ENCODE measurements at regions of chr20 and their contacts with region 1.

Region 1: DNA sequence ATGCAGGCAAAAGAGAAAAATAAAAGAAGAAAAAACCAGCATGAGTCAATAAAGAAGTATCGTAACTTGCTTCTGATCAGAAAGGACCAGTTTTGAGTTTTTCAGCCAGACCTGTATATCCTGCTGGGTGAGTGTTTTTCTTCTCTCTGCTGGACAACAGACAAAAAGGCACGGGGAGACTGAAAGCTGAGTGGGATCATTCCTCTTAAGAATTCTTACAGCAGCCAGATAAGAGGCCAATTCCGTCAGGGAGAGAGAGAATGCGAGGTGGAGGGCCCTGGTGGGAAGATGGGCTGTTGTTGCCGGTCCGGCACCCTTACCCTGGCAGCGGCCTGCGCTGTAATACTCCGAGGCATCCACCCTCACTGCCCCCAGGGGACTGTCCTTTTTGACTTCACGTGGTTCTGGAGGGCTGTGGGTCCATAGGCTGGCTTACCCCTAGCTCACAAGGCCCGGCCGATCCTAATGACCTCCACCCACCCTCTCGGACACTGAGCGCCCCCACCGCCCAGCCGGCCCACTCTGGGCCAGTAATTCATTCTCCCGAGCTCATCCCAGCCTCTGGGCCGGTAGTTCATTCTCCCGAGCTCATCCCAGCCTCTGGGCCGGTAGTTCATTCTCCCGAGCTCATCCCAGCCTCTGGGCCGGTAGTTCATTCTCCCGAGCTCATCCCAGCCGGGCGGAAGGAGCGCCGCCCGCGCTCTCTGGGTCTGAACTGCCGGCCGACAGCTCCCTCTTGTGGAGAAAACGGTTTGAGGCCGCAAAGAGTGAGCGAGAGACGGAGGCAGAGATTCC is 118.3 kb upstream of the SIRPA start:
- DNase-seq: peak; percentile 69 to 91 (median 84)
- ATAC-seq: peak; percentile 94
- H3K4me3 ChIP-seq: peak overlapping the region; percentile 61 to 68
- H3K4me3 Mint-ChIP-seq: peak overlapping the region; percentile 84
- H3K27ac ChIP-seq: peak overlapping the region in 1 of 2 experiments; percentile 18
- H3K27ac Mint-ChIP-seq: peak overlapping the region; percentile 56
- H3K4me1 ChIP-seq: peaks cover 7% of the 10 kb centered on the region
- H3K4me1 Mint-ChIP-seq: peaks cover 16% of the 10 kb centered on the region
- H3K27me3 ChIP-seq: no peaks in the 10 kb centered on the region
- H3K27me3 Mint-ChIP-seq: peaks cover 13% of the 10 kb centered on the region
- CTCF ChIP-seq: peak; percentile 78

Region 2: GRCh38 chr20:1509237-1509636 is 267.6 kb before region 1 on chr20:
- CTCF ChIA-PET with region 1: interaction called, 25 read pairs
- POLR2A ChIA-PET with region 1: no interaction called
- intact Hi-C with region 1: loop called (anchors 1 kb)
- DNase-seq: peak in 6 of 9 experiments; percentile 10 to 54 (median 31)
- ATAC-seq: peak; percentile 69
- H3K4me3 ChIP-seq: no peak overlapping the region
- H3K4me3 Mint-ChIP-seq: no peak overlapping the region
- H3K27ac ChIP-seq: no peak overlapping the region
- H3K27ac Mint-ChIP-seq: no peak overlapping the region
- H3K4me1 ChIP-seq: no peaks in the 10 kb centered on the region
- H3K4me1 Mint-ChIP-seq: peaks cover 2% of the 10 kb centered on the region
- H3K27me3 ChIP-seq: no peaks in the 10 kb centered on the region
- H3K27me3 Mint-ChIP-seq: peaks cover 4% of the 10 kb centered on the region
- CTCF ChIP-seq: peak; percentile 38

Region 3: GRCh38 chr20:1555952-1556351 is 220.9 kb before region 1 on chr20:
- CTCF ChIA-PET with region 1: interaction called, 28 read pairs
- POLR2A ChIA-PET with region 1: interaction called, 4 read pairs
- intact Hi-C with region 1: loop called (anchors 1 kb)
- DNase-seq: peak in 2 of 9 experiments; percentile 50 to 62
- ATAC-seq: peak; percentile 49
- H3K4me3 ChIP-seq: no peak overlapping the region
- H3K4me3 Mint-ChIP-seq: no peak overlapping the region
- H3K27ac ChIP-seq: no peak overlapping the region
- H3K27ac Mint-ChIP-seq: no peak overlapping the region
- H3K4me1 ChIP-seq: no peaks in the 10 kb centered on the region
- H3K4me1 Mint-ChIP-seq: peaks cover 8% of the 10 kb centered on the region
- H3K27me3 ChIP-seq: no peaks in the 10 kb centered on the region
- H3K27me3 Mint-ChIP-seq: no peaks in the 10 kb centered on the region
- CTCF ChIP-seq: peak; percentile 22

Region 4: DNA sequence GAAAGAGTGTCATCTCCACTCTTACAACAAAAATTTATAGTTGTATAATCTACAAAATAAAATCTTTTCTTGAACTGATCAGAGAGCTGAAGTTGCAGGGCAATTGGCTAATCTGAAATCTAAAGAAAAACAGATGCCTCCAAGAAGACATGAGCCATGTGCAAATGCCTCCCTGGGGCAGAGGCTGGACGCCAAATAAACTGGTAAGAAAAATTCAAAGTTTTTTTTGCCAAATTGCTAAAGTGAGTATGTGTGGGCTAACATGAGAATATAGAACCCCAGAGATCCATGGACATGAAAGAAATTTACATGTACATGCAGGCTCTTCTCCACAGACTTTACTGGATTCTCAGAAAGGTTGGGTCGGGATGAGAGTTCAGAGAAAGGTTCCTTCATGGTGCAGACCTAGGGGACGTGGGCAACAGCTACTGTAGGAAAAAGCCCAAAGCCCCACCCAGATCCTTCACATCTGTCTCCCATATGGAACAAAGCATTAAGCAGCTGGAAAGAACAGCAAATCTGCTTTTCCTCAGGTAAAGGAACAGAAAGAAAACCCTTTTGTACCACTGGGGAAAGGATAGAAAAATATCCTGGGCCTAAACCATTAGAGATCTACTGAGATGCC is 28.8 kb before region 1 on chr20:
- CTCF ChIA-PET with region 1: interaction called, 14 read pairs
- POLR2A ChIA-PET with region 1: no interaction called
- intact Hi-C with region 1: no loop called
- DNase-seq: no peak
- ATAC-seq: no peak
- H3K4me3 ChIP-seq: no peak overlapping the region
- H3K4me3 Mint-ChIP-seq: no peak overlapping the region
- H3K27ac ChIP-seq: no peak overlapping the region
- H3K27ac Mint-ChIP-seq: no peak overlapping the region
- H3K4me1 ChIP-seq: no peaks in the 10 kb centered on the region
- H3K4me1 Mint-ChIP-seq: no peaks in the 10 kb centered on the region
- H3K27me3 ChIP-seq: no peaks in the 10 kb centered on the region
- H3K27me3 Mint-ChIP-seq: no peaks in the 10 kb centered on the region
- CTCF ChIP-seq: no peak

Region 5: GRCh38 chr20:1764136-1765033 is 12.5 kb before region 1 on chr20:
- CTCF ChIA-PET with region 1: interaction called, 76 read pairs
- POLR2A ChIA-PET with region 1: no interaction called
- intact Hi-C with region 1: loop called in 1 of 2 experiments (anchors 1 kb)
- DNase-seq: peak; percentile 30 to 73 (median 57)
- ATAC-seq: peak; percentile 75
- H3K4me3 ChIP-seq: no peak overlapping the region
- H3K4me3 Mint-ChIP-seq: no peak overlapping the region
- H3K27ac ChIP-seq: no peak overlapping the region
- H3K27ac Mint-ChIP-seq: no peak overlapping the region
- H3K4me1 ChIP-seq: no peaks in the 10 kb centered on the region
- H3K4me1 Mint-ChIP-seq: no peaks in the 10 kb centered on the region
- H3K27me3 ChIP-seq: no peaks in the 10 kb centered on the region
- H3K27me3 Mint-ChIP-seq: peaks cover 2% of the 10 kb centered on the region
- CTCF ChIP-seq: peak; percentile 88

Region 6: GRCh38 chr20:1805161-1805581 is 28.3 kb after region 1 on chr20:
- CTCF ChIA-PET with region 1: no interaction called
- POLR2A ChIA-PET with region 1: no interaction called
- intact Hi-C with region 1: no loop called
- DNase-seq: no peak
- ATAC-seq: no peak
- H3K4me3 ChIP-seq: no peak overlapping the region
- H3K4me3 Mint-ChIP-seq: no peak overlapping the region
- H3K27ac ChIP-seq: no peak overlapping the region
- H3K27ac Mint-ChIP-seq: no peak overlapping the region
- H3K4me1 ChIP-seq: peaks cover 11% of the 10 kb centered on the region
- H3K4me1 Mint-ChIP-seq: peaks cover 14% of the 10 kb centered on the region
- H3K27me3 ChIP-seq: peaks cover 6 to 19% of the 10 kb centered on the region in 2 experiments
- H3K27me3 Mint-ChIP-seq: peaks cover 69% of the 10 kb centered on the region
- CTCF ChIP-seq: no peak

Region 7: GRCh38 chr20:1979106-1979779 is 202.4 kb after region 1 on chr20:
- CTCF ChIA-PET with region 1: no interaction called
- POLR2A ChIA-PET with region 1: no interaction called
- intact Hi-C with region 1: no loop called
- DNase-seq: no peak
- ATAC-seq: no peak
- H3K4me3 ChIP-seq: no peak overlapping the region
- H3K4me3 Mint-ChIP-seq: no peak overlapping the region
- H3K27ac ChIP-seq: no peak overlapping the region
- H3K27ac Mint-ChIP-seq: no peak overlapping the region
- H3K4me1 ChIP-seq: no peaks in the 10 kb centered on the region
- H3K4me1 Mint-ChIP-seq: no peaks in the 10 kb centered on the region
- H3K27me3 ChIP-seq: no peaks in the 10 kb centered on the region
- H3K27me3 Mint-ChIP-seq: peaks cover 26% of the 10 kb centered on the region
- CTCF ChIP-seq: no peak

Region 8: DNA sequence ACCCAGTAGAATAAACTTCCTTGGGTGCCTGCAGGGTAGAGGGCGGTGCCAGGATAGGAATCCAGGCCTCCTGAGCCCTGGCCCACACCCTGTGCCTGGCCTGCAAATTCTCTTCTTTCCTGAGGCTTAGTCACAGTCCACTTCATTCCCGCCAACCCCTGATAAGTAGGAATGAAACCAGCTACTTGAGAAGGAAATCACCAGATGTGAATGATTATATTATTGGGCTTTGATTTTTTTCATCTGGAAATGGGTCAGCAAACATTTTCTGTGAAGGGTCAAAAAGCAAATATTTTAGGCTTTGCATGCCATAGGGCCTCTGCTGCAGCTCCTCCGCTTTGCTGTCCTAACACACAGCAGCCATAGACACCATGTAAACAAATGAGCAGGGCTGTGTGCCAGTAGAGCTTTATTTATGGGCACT is 375.0 kb after region 1 on chr20:
- CTCF ChIA-PET with region 1: no interaction called
- POLR2A ChIA-PET with region 1: no interaction called
- intact Hi-C with region 1: no loop called
- DNase-seq: no peak
- ATAC-seq: no peak
- H3K4me3 ChIP-seq: no peak overlapping the region
- H3K4me3 Mint-ChIP-seq: no peak overlapping the region
- H3K27ac ChIP-seq: no peak overlapping the region
- H3K27ac Mint-ChIP-seq: no peak overlapping the region
- H3K4me1 ChIP-seq: no peaks in the 10 kb centered on the region
- H3K4me1 Mint-ChIP-seq: no peaks in the 10 kb centered on the region
- H3K27me3 ChIP-seq: no peaks in the 10 kb centered on the region
- H3K27me3 Mint-ChIP-seq: no peaks in the 10 kb centered on the region
- CTCF ChIP-seq: no peak